AG04450 (cell line): ENCODE measurements at regions of chr18 and their contacts with region 1.

Region 1: DNA sequence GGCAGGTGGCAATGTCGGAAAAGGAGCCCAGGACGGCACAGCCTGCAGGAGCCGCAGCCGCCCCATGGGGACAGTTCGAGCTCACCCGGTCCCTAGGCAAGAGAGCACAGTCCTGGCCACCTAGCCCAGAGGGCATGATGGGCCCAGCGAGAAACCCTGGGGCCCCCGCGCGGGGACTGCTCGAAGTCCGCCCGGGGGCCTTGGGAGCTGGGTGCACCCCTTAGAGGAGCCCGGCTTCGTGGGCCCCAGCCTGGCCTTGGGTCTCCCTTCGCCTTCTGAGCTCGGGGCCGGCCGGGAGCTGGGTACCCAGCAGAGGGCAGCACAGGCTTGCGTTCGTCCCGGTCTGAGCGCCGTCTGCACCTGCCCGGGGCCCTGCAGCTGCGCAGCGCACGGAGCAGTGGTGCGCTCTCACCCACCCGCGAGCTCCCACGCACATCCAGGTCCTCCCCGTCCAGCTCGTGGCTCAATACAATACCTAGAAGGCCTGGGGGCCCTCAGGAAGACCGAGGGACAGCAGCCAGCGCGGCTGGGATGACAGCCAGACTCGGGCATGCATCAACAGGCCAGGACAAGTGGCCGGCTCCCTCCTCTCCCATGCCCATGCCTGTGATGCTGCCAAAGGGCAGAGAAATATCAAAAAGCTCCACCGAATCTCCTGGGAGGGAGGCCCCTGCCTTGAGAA is 96.2 kb upstream of the ZNF532 start:
- DNase-seq: no peak
- H3K4me3 ChIP-seq: peak overlapping the region; percentile 41
- H3K27ac ChIP-seq: no peak overlapping the region
- H3K27me3 ChIP-seq: peaks cover 15% of the 10 kb centered on the region
- CTCF ChIP-seq: peak; percentile 83

Region 2: DNA sequence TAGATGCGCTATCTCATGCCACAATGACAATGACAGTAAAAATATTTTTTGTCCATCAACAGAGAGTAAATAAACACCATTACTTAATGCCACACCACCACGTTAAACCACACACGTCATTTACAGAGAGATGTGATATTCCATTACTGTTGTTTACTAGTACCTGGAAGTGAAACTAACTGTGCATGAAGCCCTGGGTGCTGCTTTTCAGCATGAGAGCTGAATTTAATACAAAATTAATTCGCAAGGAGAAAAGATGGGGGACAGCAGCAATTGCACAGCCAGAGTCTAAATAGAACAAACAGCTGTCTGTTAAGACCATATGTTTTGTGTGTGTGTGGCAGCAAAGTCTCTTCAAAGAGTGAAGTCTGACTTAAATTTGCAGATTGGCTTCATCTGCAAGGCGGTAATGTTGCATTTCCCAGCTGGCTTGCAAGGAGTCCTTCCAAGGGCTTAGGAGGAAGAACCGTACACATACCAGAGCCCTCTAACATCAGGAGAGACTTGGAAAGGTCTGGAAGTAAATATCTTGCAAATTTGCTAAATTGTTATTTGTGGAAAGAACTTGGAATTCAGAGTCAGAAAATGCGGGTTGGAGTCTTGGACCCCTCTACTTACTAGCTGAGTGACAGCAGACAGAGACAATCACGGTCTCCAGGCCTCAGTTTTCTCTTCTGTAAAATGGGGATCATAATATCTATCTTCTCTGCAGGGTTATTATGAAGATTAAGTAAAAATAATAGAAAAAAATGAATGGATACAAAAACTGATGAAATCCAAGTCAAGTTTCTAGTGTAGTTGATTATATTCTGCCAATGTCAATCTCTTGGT is 267.2 kb before region 1 on chr18:
- CTCF ChIA-PET with region 1: interaction called, 30 read pairs
- POLR2A ChIA-PET with region 1: no interaction called
- DNase-seq: no peak
- H3K4me3 ChIP-seq: no peak overlapping the region
- H3K27ac ChIP-seq: no peak overlapping the region
- H3K27me3 ChIP-seq: no peaks in the 10 kb centered on the region
- CTCF ChIP-seq: no peak

Region 3: DNA sequence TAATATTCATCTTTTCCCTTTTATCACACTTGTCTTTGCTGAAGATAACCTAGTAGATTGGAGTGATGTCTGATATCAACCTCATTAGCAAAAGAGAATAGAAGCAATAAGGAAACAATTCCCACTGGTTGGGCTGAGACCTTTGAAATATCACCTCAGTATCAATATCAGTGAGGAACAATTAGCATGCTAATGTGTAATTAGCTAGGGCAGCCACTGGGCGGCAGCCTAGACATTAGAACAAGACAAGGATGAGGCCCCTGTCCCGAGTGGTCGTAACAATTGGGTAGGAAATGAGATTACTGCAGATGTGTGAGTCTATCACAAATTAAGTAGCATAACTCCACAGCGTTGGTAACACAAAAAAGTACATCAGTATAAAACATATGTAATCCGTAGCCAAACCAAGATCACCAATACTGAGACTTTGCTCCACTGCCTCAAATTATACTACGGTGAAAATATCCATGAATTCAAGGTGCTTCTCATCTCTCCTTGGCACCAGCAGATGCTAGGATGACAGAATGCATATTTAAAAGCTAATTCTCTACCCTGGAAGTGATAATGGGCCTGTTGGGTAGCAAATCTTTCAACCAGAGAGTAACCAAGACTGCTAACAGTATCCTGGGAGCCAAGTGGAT is 238.6 kb before region 1 on chr18:
- CTCF ChIA-PET with region 1: interaction called, 116 read pairs
- POLR2A ChIA-PET with region 1: no interaction called
- DNase-seq: peak; percentile 24
- H3K4me3 ChIP-seq: no peak overlapping the region
- H3K27ac ChIP-seq: no peak overlapping the region
- H3K27me3 ChIP-seq: no peaks in the 10 kb centered on the region
- CTCF ChIP-seq: peak; percentile 87

Region 4: DNA sequence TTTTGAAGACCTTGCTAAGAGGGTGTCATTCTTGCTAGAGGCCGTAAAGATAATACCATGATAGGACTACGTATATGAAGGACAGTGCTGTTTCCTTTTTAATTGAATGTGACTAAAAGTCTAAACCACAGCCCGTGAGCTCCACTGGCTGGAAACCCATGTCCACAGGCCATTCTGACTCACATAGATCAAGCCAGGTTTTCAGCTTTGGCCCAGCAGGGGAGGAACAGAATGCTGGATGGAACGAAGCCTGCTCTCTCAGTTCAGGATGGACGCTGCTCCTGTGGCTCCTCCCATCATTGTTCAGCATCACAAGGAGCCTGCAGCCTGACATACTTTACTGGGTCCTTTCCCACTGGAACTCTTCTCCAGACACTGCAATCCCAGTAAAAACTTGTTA is 187.2 kb before region 1 on chr18:
- CTCF ChIA-PET with region 1: interaction called, 11 read pairs
- POLR2A ChIA-PET with region 1: no interaction called
- DNase-seq: peak; percentile 66
- H3K4me3 ChIP-seq: peak overlapping the region; percentile 14
- H3K27ac ChIP-seq: peak overlapping the region; percentile 99
- H3K27me3 ChIP-seq: no peaks in the 10 kb centered on the region
- CTCF ChIP-seq: peak; percentile 39

Region 5: DNA sequence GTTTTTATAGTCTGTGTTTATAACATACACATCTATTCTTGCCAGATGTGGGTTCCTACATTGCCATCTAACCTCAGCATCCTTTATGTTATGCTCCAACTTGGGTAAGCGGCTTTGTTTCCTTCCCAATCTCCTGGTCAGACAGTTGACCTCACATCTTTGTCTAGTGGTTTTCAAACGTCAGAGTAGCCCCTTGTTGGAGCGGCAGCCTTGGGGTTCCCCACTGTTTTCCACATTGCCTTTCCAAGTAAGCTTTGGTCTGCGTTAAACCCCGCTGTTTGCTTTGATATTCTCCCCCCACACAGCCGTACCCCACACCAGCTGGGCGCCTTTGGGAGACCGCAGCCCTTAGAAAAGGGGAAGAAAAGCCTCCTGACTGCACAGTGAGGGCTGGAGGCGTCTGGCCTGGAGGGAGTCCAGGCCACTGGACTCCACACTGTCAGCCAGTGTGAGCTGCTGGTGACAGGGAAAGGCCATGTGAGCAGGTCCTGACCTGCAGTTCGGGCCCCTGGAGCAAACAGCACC is 13.8 kb before region 1 on chr18:
- CTCF ChIA-PET with region 1: interaction called, 34 read pairs
- POLR2A ChIA-PET with region 1: no interaction called
- DNase-seq: no peak
- H3K4me3 ChIP-seq: no peak overlapping the region
- H3K27ac ChIP-seq: no peak overlapping the region
- H3K27me3 ChIP-seq: no peaks in the 10 kb centered on the region
- CTCF ChIP-seq: no peak

Region 6: GRCh38 chr18:59056706-59057492 is 288.5 kb after region 1 on chr18:
- CTCF ChIA-PET with region 1: interaction called, 27 read pairs
- POLR2A ChIA-PET with region 1: no interaction called
- DNase-seq: peak; percentile 15
- H3K4me3 ChIP-seq: no peak overlapping the region
- H3K27ac ChIP-seq: no peak overlapping the region
- H3K27me3 ChIP-seq: no peaks in the 10 kb centered on the region
- CTCF ChIP-seq: peak; percentile 82

Region 7: DNA sequence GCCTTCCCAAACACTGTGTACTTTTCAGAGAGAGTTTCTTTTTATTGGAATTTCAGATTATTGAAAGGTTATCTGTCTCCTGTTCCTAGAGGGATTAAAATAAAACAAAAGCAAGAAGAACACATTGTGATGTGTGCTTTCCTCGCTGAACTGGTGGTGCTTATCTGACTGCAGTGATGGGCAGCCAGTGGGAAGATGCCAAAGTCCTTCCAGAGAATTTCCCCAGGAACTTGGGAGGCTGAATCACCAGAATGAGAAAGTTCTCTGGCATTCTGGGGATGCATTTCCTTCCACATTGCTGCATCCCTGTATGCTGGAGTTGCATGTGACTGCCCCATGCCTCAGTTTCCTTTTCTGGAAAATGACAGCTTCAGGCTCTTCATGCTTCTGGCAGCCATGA is 317.4 kb after region 1 on chr18:
- CTCF ChIA-PET with region 1: interaction called, 14 read pairs
- POLR2A ChIA-PET with region 1: no interaction called
- DNase-seq: no peak
- H3K4me3 ChIP-seq: no peak overlapping the region
- H3K27ac ChIP-seq: no peak overlapping the region
- H3K27me3 ChIP-seq: peaks cover 14% of the 10 kb centered on the region
- CTCF ChIP-seq: no peak